ENCODE measurements at regions of chr1 and their contacts with region 1.

Region 1: GRCh38 chr1:98053471-98054366 is 132.9 kb upstream of the DPYD start:
- DNase-seq: peak; percentile 73
- ATAC-seq: peak; percentile 90
- H3K4me3 Mint-ChIP-seq: peak overlapping the region; percentile 55
- H3K27ac Mint-ChIP-seq: no peak overlapping the region
- H3K4me1 Mint-ChIP-seq: peaks cover 21% of the 10 kb centered on the region
- H3K27me3 Mint-ChIP-seq: peaks cover 57% of the 10 kb centered on the region

Region 2: GRCh38 chr1:96721416-96722160 is 1332.1 kb before region 1 on chr1 and contains the start of gene PTBP2:
- CTCF ChIA-PET with region 1: no interaction called
- POLR2A ChIA-PET with region 1: no interaction called
- intact Hi-C with region 1: loop called in 1 of 2 experiments (anchors 10 kb)
- DNase-seq: peak; percentile 90
- ATAC-seq: peak; percentile 95
- H3K4me3 Mint-ChIP-seq: peak within 1 kb of the TSS; percentile 95
- H3K27ac Mint-ChIP-seq: peak within 1 kb of the TSS; percentile 81
- H3K4me1 Mint-ChIP-seq: peaks cover 22% of the 10 kb centered on the region
- H3K27me3 Mint-ChIP-seq: no peaks in the 10 kb centered on the region
- total RNA-seq, gene PTBP2: 13.5 to 14.8 TPM

Region 3: GRCh38 chr1:97137862-97138514 is 915.7 kb before region 1 on chr1:
- CTCF ChIA-PET with region 1: interaction called, 10 read pairs
- POLR2A ChIA-PET with region 1: no interaction called
- intact Hi-C with region 1: loop called (anchors 2 to 5 kb)
- DNase-seq: peak; percentile 18
- ATAC-seq: peak; percentile 83
- H3K4me3 Mint-ChIP-seq: no peak overlapping the region
- H3K27ac Mint-ChIP-seq: no peak overlapping the region
- H3K4me1 Mint-ChIP-seq: no peaks in the 10 kb centered on the region
- H3K27me3 Mint-ChIP-seq: no peaks in the 10 kb centered on the region

Region 4: DNA sequence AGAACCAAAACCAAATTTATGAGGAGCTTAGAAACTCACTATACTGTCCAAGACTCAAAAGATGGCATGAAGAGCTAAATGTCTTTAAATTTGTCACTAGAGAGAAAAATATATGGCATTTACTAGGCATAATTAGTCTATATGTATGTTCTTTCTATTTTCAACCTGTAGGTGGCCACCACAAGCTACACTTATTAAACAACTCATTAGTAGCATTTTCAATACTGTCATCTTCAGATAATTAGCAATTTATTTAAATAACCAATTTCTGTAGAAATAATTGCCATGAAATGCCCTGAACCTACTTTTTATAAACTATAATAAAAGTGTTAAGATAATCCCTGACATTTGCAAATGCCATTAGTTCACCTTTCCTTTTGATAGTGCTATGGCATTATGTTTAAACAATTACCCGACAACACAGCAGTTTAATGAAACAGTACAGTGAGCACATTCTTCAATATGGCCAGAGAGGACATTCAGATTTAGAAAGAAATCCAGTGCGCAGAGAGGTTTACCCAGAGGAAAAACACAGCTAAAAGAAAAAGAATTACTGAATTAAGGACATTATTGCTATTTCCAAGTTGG is 809.7 kb before region 1 on chr1:
- CTCF ChIA-PET with region 1: no interaction called
- POLR2A ChIA-PET with region 1: no interaction called
- intact Hi-C with region 1: loop called (anchors 5 to 10 kb)
- DNase-seq: no peak
- ATAC-seq: no peak
- H3K4me3 Mint-ChIP-seq: no peak overlapping the region
- H3K27ac Mint-ChIP-seq: no peak overlapping the region
- H3K4me1 Mint-ChIP-seq: no peaks in the 10 kb centered on the region
- H3K27me3 Mint-ChIP-seq: no peaks in the 10 kb centered on the region

Region 5: GRCh38 chr1:97791251-97791650 is 262.5 kb before region 1 on chr1:
- CTCF ChIA-PET with region 1: interaction called, 3 read pairs
- POLR2A ChIA-PET with region 1: no interaction called
- intact Hi-C with region 1: loop called in 1 of 2 experiments (anchors 10 kb)
- DNase-seq: no peak
- ATAC-seq: peak; percentile 94
- H3K4me3 Mint-ChIP-seq: no peak overlapping the region
- H3K27ac Mint-ChIP-seq: no peak overlapping the region
- H3K4me1 Mint-ChIP-seq: peaks cover 31% of the 10 kb centered on the region
- H3K27me3 Mint-ChIP-seq: no peaks in the 10 kb centered on the region

Region 6: GRCh38 chr1:97920832-97921571 is 132.7 kb before region 1 on chr1 and contains the start of gene DPYD:
- CTCF ChIA-PET with region 1: interaction called, 3 read pairs
- POLR2A ChIA-PET with region 1: no interaction called
- intact Hi-C with region 1: loop called in 1 of 2 experiments (anchors 2 kb)
- DNase-seq: peak; percentile 90
- ATAC-seq: peak; percentile 85
- H3K4me3 Mint-ChIP-seq: peak within 1 kb of the TSS; percentile 87
- H3K27ac Mint-ChIP-seq: peak within 1 kb of the TSS; percentile 90
- H3K4me1 Mint-ChIP-seq: peaks cover 43% of the 10 kb centered on the region
- H3K27me3 Mint-ChIP-seq: no peaks in the 10 kb centered on the region
- total RNA-seq, gene DPYD: 6.8 to 7.1 TPM

Measured in activated CD4-positive, alpha-beta T cell treated with anti-CD3 and anti-CD28 coated beads for 36 hours (primary cell).